ENCODE measurements at regions of chr1 and their contacts with region 1.

Region 1: GRCh38 chr1:176391621-176392020 is 71.4 kb upstream of the PAPPA2 start:
- DNase-seq: no peak
- ATAC-seq: no peak
- H3K4me3 ChIP-seq: no peak overlapping the region
- H3K27ac ChIP-seq: no peak overlapping the region
- H3K4me1 ChIP-seq: no peaks in the 10 kb centered on the region
- H3K27me3 ChIP-seq: no peaks in the 10 kb centered on the region
- CTCF ChIP-seq: no peak

Region 2: GRCh38 chr1:176338877-176339276 is 52.7 kb before region 1 on chr1:
- intact Hi-C with region 1: no loop called
- DNase-seq: no peak
- ATAC-seq: no peak
- H3K4me3 ChIP-seq: no peak overlapping the region
- H3K27ac ChIP-seq: no peak overlapping the region
- H3K4me1 ChIP-seq: no peaks in the 10 kb centered on the region
- H3K27me3 ChIP-seq: peaks cover 0 to 2% (median 0%) of the 10 kb centered on the region in 3 donors
- CTCF ChIP-seq: no peak

Region 3: GRCh38 chr1:176448342-176448741 is 56.7 kb after region 1 on chr1:
- intact Hi-C with region 1: loop called in 1 of 2 experiments (anchors 5 kb)
- DNase-seq: no peak
- ATAC-seq: no peak
- H3K4me3 ChIP-seq: no peak overlapping the region
- H3K27ac ChIP-seq: no peak overlapping the region
- H3K4me1 ChIP-seq: no peaks in the 10 kb centered on the region
- H3K27me3 ChIP-seq: peaks cover 0 to 2% (median 0%) of the 10 kb centered on the region in 3 donors
- CTCF ChIP-seq: no peak

Region 4: DNA sequence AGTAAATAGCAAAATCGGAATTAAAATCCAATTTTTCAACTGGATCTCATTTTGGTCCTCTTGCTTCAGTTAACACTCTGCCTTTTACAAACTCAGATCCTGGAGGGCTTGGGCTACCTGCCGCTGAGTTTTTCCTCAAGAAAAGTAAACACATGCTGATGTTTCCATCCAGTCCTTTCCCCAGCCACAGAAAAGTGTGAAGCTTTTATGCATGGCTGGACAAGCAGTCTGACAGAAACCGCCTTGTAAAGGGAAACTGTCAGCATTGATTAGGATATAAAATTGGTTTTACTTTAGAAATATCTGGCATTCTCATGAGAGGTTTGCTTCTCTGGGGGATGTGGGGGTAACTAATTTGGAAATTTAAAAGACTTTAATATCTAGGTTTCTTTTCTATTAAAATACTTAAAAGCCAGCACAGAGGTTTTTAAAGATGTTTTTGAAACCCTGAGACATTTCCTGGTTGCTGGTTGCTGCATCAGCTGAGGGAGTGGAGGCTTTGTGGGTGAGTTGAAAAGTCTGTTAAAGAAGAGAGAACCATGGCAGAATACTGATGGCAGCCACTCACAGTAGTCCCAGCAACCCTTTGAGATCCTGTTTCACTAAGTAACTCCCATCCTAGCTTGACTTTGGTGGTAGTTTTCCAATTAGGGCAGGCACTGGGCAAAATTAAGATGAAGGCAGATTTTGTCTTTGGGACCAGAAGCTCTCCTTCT is 309.7 kb after region 1 on chr1:
- intact Hi-C with region 1: no loop called
- DNase-seq: no peak
- ATAC-seq: no peak
- H3K4me3 ChIP-seq: no peak overlapping the region
- H3K27ac ChIP-seq: no peak overlapping the region
- H3K4me1 ChIP-seq: peaks cover 10% of the 10 kb centered on the region
- H3K27me3 ChIP-seq: no peaks in the 10 kb centered on the region
- CTCF ChIP-seq: no peak

Measured in psoas muscle (tissue), 8 donors.